Heart right ventricle (tissue), 16 donors: ENCODE measurements at regions of chr11 and their contacts with region 1.

Region 1: GRCh38 chr11:100094121-100094865 is 592.8 kb upstream of the ARHGAP42 start:
- DNase-seq: no peak
- ATAC-seq: no peak
- H3K4me3 ChIP-seq: no peak overlapping the region
- H3K27ac ChIP-seq: no peak overlapping the region
- H3K4me1 ChIP-seq: no peaks in the 10 kb centered on the region
- H3K27me3 ChIP-seq: no peaks in the 10 kb centered on the region
- CTCF ChIP-seq: no peak

Region 2: DNA sequence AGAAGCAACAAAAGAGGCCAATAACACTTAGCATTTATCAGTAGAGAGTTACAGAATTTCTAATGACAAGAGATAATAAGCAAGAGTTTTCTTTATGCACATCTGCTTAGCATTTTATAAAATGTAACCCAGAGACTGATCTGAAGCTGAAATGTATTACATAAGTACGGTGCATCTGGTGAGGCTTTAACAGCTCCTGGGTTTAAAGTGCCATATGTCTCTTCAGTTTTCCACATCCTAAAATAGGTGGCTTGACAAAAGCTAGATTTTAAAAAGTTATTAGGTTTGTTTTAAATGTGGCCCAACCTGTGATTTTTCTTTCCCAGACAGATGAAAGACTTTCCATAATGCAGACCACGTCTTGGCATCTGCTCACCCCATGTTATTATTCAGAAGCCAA is 27.9 kb before region 1 on chr11:
- intact Hi-C with region 1: no loop called
- DNase-seq: no peak
- ATAC-seq: no peak
- H3K4me3 ChIP-seq: no peak overlapping the region
- H3K27ac ChIP-seq: no peak overlapping the region
- H3K4me1 ChIP-seq: no peaks in the 10 kb centered on the region
- H3K27me3 ChIP-seq: no peaks in the 10 kb centered on the region
- CTCF ChIP-seq: no peak

Region 3: DNA sequence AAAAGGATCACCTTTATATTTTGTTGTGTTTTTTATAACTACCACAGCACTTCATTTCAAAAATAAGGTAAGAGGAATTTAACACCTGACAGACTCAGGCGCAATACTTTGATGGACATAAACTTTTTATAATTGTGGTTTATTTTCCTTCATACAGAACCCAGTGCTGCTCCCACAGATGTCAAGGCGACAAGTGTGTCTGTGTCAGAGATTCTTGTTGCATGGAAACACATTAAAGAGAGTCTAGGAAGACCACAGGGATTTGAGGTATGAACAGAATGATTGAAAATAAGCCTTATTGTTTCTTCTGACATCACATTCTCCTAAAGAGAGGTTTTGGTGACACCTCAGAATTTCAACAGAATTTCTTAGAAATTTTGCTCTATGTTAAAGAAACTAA is 213.9 kb after region 1 on chr11:
- intact Hi-C with region 1: loop called in 1 of 10 experiments (anchors 5 kb)
- DNase-seq: no peak
- ATAC-seq: no peak
- H3K4me3 ChIP-seq: no peak overlapping the region
- H3K27ac ChIP-seq: no peak overlapping the region
- H3K4me1 ChIP-seq: no peaks in the 10 kb centered on the region
- H3K27me3 ChIP-seq: no peaks in the 10 kb centered on the region
- CTCF ChIP-seq: no peak